ENCODE measurements at regions of chr3 and their contacts with region 1.

Region 1: GRCh38 chr3:191342411-191342810 is 12.1 kb upstream of the UTS2B start:
- DNase-seq: no peak
- H3K4me3 Mint-ChIP-seq: no peak overlapping the region
- H3K27ac Mint-ChIP-seq: no peak overlapping the region
- H3K4me1 Mint-ChIP-seq: peaks cover 4% of the 10 kb centered on the region
- H3K27me3 Mint-ChIP-seq: no peaks in the 10 kb centered on the region

Region 2: DNA sequence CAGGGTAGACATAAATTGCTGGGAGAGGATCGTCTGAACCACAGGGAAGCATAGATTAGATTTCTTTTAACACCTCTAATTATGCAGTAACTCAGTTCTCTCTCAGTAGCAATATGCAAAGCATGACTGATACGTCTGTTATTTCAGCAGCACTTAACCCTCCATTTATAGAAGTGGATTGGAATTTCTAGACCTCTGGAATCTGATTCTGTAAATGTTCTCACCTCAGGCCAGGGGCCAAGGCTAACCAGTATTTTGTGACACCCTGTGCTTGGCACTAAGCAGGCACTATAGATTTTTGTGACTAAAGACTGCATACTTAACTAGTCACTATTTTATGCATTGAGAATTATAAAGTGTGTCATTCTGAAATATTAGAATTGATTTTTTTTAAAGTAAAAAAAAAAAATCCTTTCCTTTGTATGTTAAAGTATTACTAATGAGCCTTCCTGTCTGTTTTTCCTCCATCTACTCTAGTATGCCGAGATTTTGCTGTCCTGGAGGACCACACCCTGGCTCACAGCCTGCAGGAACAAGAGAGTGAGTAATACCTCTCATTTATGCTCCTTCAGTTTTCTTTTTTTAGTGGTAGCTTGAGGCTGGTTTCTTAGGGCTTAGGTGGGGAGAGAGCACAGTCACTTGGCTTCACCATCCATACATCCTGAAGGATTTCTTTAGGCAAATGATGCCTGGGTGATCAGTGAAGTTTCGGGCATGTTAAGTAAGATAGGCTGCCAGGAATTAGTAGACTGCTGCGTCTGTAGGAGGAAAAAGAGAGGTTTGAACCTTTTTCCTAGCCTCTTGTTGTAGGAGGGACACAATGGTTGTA is 14.4 kb after region 1 on chr3:
- CTCF ChIA-PET with region 1: no interaction called
- intact Hi-C with region 1: loop called (anchors 1 kb)
- DNase-seq: no peak
- H3K4me3 Mint-ChIP-seq: no peak overlapping the region
- H3K27ac Mint-ChIP-seq: no peak overlapping the region
- H3K4me1 Mint-ChIP-seq: peaks cover 7% of the 10 kb centered on the region
- H3K27me3 Mint-ChIP-seq: no peaks in the 10 kb centered on the region

Measured in activated naive CD4-positive, alpha-beta T cell treated with anti-CD3 and anti-CD28 coated beads for 36 hours (primary cell).